Testis (tissue), 5 donors: ENCODE measurements at regions of chrX and their contacts with region 1.

Region 1: DNA sequence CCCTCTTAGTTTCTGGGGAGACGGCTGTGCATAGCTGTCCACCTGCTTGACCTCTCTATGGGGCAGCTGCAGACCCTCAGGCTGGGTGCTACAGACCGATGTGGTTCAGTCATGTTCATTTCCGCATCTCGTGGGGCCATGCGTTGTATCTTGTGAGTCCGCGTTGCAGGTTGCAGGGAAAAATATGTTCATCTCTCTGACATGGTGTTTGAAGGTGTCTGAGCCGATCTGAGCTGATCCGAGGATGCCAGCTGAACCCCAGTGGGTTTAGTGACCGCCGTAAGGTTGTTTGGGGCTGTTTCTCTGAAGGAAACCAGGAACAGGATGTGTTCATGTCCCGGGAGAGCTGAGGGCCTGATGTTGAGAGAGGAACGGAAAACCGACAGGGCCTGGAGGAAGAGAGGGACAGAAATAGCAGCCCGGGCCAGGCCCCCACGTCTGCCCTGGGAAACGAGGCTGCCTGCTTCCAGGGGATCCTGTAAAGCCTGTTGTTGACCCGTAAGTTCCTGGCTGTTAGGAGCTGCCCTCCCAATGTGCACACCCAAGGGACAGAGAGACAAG is 9.8 kb upstream of the P2RY8 start:
- DNase-seq: no peak
- H3K4me3 ChIP-seq: no peak overlapping the region
- H3K27ac ChIP-seq: no peak overlapping the region
- H3K4me1 ChIP-seq: no peaks in the 10 kb centered on the region
- H3K27me3 ChIP-seq: no peaks in the 10 kb centered on the region
- CTCF ChIP-seq: no peak
- POLR2A ChIP-seq: no peak

Region 2: DNA sequence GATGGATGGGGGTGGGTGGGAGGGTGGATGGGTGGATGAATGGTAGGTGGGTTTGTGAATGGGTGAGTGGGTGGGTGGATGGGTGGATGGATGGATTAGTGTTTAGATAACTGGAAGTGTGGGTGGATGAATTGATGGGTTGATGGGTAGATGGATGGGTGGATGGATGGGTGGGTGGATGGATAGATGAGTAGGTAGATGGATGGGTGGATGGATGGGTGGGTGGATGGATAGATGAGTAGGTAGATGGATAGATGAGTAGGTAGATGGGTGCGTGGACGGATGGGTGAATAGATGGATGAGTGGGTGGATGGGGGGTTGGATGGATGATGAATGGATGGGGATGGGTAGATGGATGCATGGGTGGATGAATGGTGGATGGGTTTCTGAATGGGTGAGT is 73.8 kb before region 1 on chrX:
- intact Hi-C with region 1: loop called (anchors 5 kb)
- DNase-seq: no peak
- H3K4me3 ChIP-seq: no peak overlapping the region
- H3K27ac ChIP-seq: no peak overlapping the region
- H3K4me1 ChIP-seq: no peaks in the 10 kb centered on the region
- H3K27me3 ChIP-seq: no peaks in the 10 kb centered on the region
- CTCF ChIP-seq: no peak
- POLR2A ChIP-seq: no peak

Region 3: DNA sequence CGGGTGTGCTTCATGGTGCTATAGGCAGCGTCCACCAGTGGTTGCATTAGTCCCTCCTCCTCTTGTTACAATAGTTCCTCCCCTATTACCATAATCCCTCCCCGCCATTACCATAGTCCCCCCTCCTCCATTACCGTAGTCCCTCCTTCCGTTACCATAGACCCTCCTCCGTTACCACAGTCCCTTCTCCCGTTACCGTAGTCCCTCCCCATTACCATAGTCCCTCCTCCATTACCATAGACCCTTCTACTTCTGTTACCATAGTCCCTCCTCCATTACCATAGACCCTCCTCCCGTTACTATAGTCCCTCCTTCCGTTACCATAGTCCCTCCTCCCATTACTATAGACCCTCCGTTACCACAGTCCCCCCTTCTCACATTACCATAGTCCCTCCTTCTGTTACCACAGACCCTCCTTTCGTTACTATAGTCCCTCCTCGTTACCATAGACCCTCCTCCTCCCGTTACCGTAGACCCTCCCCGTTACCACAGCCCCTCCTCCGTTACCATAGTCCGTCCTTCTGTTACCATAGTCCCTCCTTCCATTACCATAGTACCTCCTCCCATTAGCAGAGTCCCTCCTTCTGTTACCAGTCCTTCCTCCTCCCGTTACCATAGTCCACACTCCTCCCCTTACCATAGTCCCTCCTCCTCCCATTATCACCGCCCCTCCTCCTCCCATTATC is 824.4 kb after region 1 on chrX:
- intact Hi-C with region 1: no loop called
- DNase-seq: no peak
- H3K4me3 ChIP-seq: no peak overlapping the region
- H3K27ac ChIP-seq: no peak overlapping the region
- H3K4me1 ChIP-seq: no peaks in the 10 kb centered on the region
- H3K27me3 ChIP-seq: no peaks in the 10 kb centered on the region
- CTCF ChIP-seq: no peak
- POLR2A ChIP-seq: no peak